ENCODE measurements at regions of chr9 and their contacts with region 1.

Region 1: GRCh38 chr9:22307013-22307711 is 139.5 kb upstream of the DMRTA1 start:
- DNase-seq: peak; percentile 28 to 84
- ATAC-seq: peak; percentile 70 to 85; a peak in 4 of 6 replicates
- H3K4me3 ChIP-seq: no peak overlapping the region
- H3K27ac ChIP-seq: peak overlapping the region in 1 of 2 experiments; percentile 14; a peak in 2 of 6 replicates
- H3K4me1 ChIP-seq: peaks cover 23% of the 10 kb centered on the region
- CTCF ChIP-seq: peak; percentile 94
- EP300 ChIP-seq: no peak
- POLR2A ChIP-seq: no peak
- RAD21 ChIP-seq: peak; percentile 92 to 95

Region 2: GRCh38 chr9:21789541-21790037 is 517.6 kb before region 1 on chr9:
- CTCF ChIA-PET with region 1: no interaction called
- POLR2A ChIA-PET with region 1: no interaction called
- DNase-seq: peak; percentile 74 to 96
- ATAC-seq: peak; percentile 94 to 99
- H3K4me3 ChIP-seq: peak overlapping the region; percentile 27; the same call in 2 of the 3 replicates
- H3K27ac ChIP-seq: peak overlapping the region; percentile 65 to 76
- H3K4me1 ChIP-seq: peaks cover 15% of the 10 kb centered on the region
- CTCF ChIP-seq: peak; percentile 99
- EP300 ChIP-seq: no peak
- POLR2A ChIP-seq: no peak
- RAD21 ChIP-seq: peak; percentile 83 to 99

Region 3: DNA sequence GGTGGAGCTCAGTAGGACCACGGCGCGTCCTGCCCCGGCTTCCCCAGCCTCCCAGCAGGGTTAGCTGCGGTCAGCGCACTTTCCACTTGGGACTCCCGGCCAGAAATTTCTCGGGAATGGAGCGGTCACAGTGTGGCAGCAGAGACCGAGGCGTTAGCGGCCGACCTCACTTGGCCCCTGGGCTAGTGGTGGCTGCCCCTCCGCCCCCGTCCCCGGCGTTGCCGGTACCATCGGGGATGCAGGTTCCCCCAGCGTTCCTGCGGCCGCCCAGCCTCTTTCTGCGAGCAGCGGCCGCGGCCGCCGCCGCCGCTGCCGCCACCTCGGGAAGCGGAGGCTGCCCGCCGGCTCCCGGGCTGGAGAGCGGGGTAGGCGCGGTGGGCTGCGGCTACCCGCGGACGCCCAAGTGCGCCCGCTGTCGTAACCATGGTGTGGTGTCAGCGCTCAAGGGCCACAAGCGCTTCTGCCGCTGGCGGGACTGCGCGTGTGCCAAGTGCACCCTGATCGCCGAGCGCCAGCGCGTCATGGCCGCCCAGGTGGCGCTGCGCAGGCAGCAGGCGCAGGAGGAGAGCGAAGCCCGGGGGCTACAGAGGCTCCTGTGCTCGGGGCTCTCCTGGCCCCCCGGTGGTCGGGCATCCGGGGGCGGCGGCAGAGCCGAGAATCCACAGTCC is 139.9 kb after region 1 on chr9:
- CTCF ChIA-PET with region 1: interaction called, 34 read pairs
- POLR2A ChIA-PET with region 1: interaction called, 4 read pairs
- DNase-seq: peak; percentile 72 to 83
- ATAC-seq: peak; percentile 94 to 96
- H3K4me3 ChIP-seq: peak overlapping the region; percentile 86
- H3K27ac ChIP-seq: peak overlapping the region; percentile 81 to 86
- H3K4me1 ChIP-seq: peaks cover 24% of the 10 kb centered on the region; the same call in 2 of the 3 replicates
- CTCF ChIP-seq: peak; percentile 53
- EP300 ChIP-seq: no peak
- POLR2A ChIP-seq: peak; percentile 49
- RAD21 ChIP-seq: peak in 1 of 2 experiments; percentile 29; a peak in 1 of 5 replicates

Region 4: GRCh38 chr9:22452415-22453010 is 145.4 kb after region 1 on chr9:
- CTCF ChIA-PET with region 1: interaction called, 34 read pairs
- POLR2A ChIA-PET with region 1: interaction called, 4 read pairs
- DNase-seq: peak; percentile 6 to 38
- ATAC-seq: peak in 1 of 2 experiments; percentile 66; a peak in 3 of 6 replicates
- H3K4me3 ChIP-seq: no peak overlapping the region
- H3K27ac ChIP-seq: no peak overlapping the region
- H3K4me1 ChIP-seq: peaks cover 20% of the 10 kb centered on the region; the same call in 2 of the 3 replicates
- CTCF ChIP-seq: peak; percentile 94
- EP300 ChIP-seq: no peak
- POLR2A ChIP-seq: no peak
- RAD21 ChIP-seq: peak; percentile 82 to 87

Measured in A549 (cell line).